Activated CD8-positive, alpha-beta memory T cell treated with anti-CD3 and anti-CD28 coated beads, Interleukin-2, amount 10 ng/mL, durations not matched to agents 7 days and 5 days (primary cell): ENCODE measurements at regions of chr19 and their contacts with region 1.

Region 1: GRCh38 chr19:41945135-41945766 is 13.9 kb downstream of the RABAC1 start:
- DNase-seq: peak; percentile 97
- ATAC-seq: peak; percentile 88
- H3K4me3 Mint-ChIP-seq: peak overlapping the region; percentile 43
- H3K27ac Mint-ChIP-seq: peak overlapping the region; percentile 91
- H3K4me1 Mint-ChIP-seq: peaks cover 52% of the 10 kb centered on the region
- H3K27me3 Mint-ChIP-seq: peaks cover 17% of the 10 kb centered on the region

Region 2: DNA sequence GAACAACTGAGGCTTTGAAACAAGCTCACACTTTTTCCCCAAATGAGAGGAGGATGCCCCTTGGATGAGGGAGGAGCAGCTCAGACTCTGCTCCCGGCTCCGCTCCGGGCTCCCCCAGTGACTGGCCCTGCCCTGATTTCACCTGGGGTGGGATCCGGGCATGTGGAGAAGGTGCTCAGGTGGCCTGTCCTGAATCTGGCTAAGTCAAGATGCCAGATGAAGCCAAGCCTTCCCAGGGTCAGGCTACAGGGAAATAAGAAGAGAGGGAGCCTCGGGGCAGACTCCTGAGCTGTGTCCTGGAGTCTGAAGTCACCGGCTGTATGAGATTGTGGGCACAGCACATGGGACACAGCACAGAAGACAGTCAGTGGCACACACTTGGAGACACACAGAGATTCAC is 226.5 kb before region 1 on chr19:
- CTCF ChIA-PET with region 1: no interaction called
- DNase-seq: no peak
- ATAC-seq: no peak
- H3K4me3 Mint-ChIP-seq: no peak overlapping the region
- H3K27ac Mint-ChIP-seq: no peak overlapping the region
- H3K4me1 Mint-ChIP-seq: no peaks in the 10 kb centered on the region
- H3K27me3 Mint-ChIP-seq: peaks cover 18% of the 10 kb centered on the region

Region 3: GRCh38 chr19:41883821-41884733 is 61.2 kb before region 1 on chr19:
- CTCF ChIA-PET with region 1: interaction called, 85 read pairs
- DNase-seq: peak; percentile 97
- ATAC-seq: peak; percentile 81
- H3K4me3 Mint-ChIP-seq: peak overlapping the region; percentile 82
- H3K27ac Mint-ChIP-seq: peak overlapping the region; percentile 94
- H3K4me1 Mint-ChIP-seq: peaks cover 41% of the 10 kb centered on the region
- H3K27me3 Mint-ChIP-seq: no peaks in the 10 kb centered on the region

Region 4: GRCh38 chr19:41934849-41935374 is 10.3 kb before region 1 on chr19:
- CTCF ChIA-PET with region 1: interaction called, 12 read pairs
- DNase-seq: peak; percentile 84
- ATAC-seq: peak; percentile 79
- H3K4me3 Mint-ChIP-seq: no peak overlapping the region
- H3K27ac Mint-ChIP-seq: peak overlapping the region; percentile 44
- H3K4me1 Mint-ChIP-seq: peaks cover 33% of the 10 kb centered on the region
- H3K27me3 Mint-ChIP-seq: peaks cover 42% of the 10 kb centered on the region

Region 5: DNA sequence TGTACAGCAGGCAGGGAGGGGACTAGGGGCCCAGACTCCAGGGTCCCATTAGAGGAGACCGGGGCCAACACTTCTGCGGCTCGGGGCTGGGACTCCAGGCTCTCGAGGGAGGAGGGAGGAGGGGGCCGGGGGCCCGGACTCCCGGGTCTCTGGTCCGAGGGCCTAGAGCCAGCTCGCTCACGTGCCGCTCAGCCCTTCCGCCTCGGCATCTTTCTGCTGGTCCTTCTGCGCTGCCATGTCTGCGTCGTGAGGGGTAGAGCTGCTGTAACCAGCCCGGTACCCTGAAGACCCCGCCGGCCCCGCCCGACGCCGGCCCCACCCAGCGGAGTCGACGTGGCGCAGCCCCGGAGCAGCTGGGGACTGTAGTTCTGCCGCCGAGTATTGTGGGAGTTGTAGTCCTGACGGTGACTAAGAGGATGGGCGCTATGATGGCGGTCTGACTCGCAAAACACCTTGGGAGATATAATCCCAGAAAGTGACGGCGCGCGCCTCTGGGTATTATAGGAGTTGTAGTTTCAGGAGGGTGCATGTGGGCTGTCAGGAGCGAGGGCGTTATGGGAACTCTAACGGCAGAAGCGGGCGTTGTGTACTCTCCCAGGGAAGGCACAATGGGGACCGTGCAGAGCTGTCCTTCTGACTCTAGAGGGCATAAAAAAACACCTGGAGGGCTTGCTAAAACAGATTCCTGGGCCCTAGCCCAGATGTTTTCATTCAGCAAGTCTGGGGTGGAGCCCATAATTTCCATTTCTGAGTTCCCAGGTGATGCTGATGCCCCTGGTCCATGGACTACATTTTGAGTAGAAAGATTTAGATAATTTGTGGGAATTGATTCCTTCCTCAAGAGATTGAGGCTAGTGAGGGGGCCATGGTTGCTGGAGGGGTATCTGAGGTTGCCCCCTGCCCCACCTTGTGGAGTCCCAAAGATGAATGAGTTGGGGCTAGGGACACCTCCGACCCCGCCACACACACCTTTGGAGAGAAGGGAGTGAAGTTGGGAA is 14.1 kb after region 1 on chr19 and contains the start of gene RABAC1:
- CTCF ChIA-PET with region 1: interaction called, 24 read pairs
- DNase-seq: peak; percentile 95
- ATAC-seq: peak; percentile 91
- H3K4me3 Mint-ChIP-seq: peak within 1 kb of the TSS; percentile 94
- H3K27ac Mint-ChIP-seq: peak within 1 kb of the TSS; percentile 87
- H3K4me1 Mint-ChIP-seq: peaks cover 19% of the 10 kb centered on the region
- H3K27me3 Mint-ChIP-seq: no peaks in the 10 kb centered on the region
- total RNA-seq, gene RABAC1: 81.3 to 93.9 TPM

Region 6: GRCh38 chr19:41998246-41999020 is 53.2 kb after region 1 on chr19:
- CTCF ChIA-PET with region 1: no interaction called
- DNase-seq: peak; percentile 58
- ATAC-seq: no peak
- H3K4me3 Mint-ChIP-seq: no peak overlapping the region
- H3K27ac Mint-ChIP-seq: no peak overlapping the region
- H3K4me1 Mint-ChIP-seq: peaks cover 30% of the 10 kb centered on the region
- H3K27me3 Mint-ChIP-seq: peaks cover 70% of the 10 kb centered on the region